Psoas muscle (tissue), 8 donors: ENCODE measurements at regions of chr3 and their contacts with region 1.

Region 1: DNA sequence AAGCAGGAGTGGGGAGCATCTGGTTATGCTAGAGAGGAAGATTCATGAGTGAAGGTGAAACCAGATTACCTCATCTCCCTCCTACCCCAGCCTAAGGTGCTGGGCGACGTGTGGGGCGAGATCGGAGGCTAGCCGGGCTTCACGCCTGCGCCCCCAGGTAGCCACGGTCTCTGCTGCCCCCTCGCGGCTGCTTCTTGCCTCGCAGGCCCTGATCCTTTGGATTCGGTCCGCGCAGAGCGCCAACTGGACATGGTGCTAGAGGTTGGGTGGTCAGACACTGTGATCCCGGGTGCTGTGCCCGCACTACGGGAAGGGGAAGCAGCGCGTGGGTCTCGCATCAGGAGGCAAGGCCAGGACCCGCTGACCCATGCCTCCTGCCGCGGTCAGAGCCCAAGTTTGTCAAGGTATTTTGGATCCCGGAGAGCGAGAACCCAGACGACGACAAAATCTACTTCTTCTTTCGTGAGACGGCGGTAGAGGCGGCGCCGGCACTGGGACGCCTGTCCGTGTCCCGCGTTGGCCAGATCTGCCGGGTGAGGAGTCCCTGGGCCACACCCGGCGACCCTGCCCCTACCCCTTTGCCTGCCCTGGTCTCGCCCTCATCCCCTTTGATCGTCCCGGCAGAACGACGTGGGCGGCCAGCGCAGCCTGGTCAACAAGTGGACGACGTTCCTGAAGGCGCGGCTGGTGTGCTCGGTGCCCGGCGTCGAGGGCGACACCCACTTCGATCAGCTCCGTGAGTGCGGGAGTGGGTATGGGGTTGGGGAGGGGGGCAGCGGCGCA is 4.2 kb downstream of the SEMA3B start:
- DNase-seq: peak; percentile 86 to 93
- ATAC-seq: peak; percentile 79 to 86 (median 84)
- H3K4me3 ChIP-seq: peak overlapping the region; percentile 38
- H3K27ac ChIP-seq: no peak overlapping the region
- H3K4me1 ChIP-seq: peaks cover 30% of the 10 kb centered on the region
- H3K27me3 ChIP-seq: peaks cover 0 to 1% (median 0%) of the 10 kb centered on the region in 3 donors
- CTCF ChIP-seq: peak; percentile 99

Region 2: GRCh38 chr3:50121416-50122032 is 151.6 kb before region 1 on chr3:
- intact Hi-C with region 1: loop called (anchors 5 kb)
- DNase-seq: peak; percentile 72 to 88
- ATAC-seq: peak; percentile 84 to 90 (median 86)
- H3K4me3 ChIP-seq: no peak overlapping the region
- H3K27ac ChIP-seq: no peak overlapping the region
- H3K4me1 ChIP-seq: peaks cover 4% of the 10 kb centered on the region
- H3K27me3 ChIP-seq: no peaks in the 10 kb centered on the region
- CTCF ChIP-seq: peak; percentile 87